ENCODE measurements at regions of chr22 and their contacts with region 1.

Region 1: DNA sequence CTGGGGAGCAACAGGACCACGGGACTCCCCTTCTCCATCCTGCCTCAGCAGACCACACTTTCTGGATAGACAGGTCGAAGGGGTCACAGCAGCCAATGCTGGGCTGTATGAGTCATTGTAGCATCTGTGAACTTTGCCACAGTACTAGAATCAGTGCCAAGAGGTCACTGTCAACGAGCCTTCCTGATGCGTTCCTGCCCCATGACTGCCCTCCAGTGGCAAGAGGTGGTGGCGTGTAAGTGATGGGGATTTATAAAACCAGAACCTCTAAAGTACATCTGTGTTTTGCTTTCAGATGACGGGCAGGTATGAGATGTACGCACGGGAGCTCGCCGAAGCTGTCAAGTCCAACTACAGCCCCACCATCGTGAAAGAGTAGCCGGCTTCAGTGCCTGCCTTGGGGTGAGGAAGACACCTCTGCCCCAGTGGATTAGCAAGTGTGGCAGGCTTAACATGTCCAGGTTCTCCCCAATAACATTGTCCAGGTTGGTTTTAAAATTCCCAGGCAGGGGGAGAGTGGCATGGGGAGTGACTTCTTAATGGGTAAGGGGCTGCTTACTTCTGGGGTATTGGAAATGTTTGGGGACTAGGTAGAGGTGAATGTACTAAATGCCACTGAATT is 29.4 kb downstream of the GUCD1 start:
- DNase-seq: peak; percentile 54 to 77 (median 71)
- ATAC-seq: peak; percentile 98
- H3K4me3 ChIP-seq: no peak overlapping the region
- H3K4me3 Mint-ChIP-seq: no peak overlapping the region
- H3K27ac ChIP-seq: no peak overlapping the region
- H3K27ac Mint-ChIP-seq: no peak overlapping the region
- H3K4me1 ChIP-seq: no peaks in the 10 kb centered on the region
- H3K4me1 Mint-ChIP-seq: peaks cover 0 to 12% (median 9%) of the 10 kb centered on the region in 7 donors
- H3K27me3 ChIP-seq: no peaks in the 10 kb centered on the region
- H3K27me3 Mint-ChIP-seq: peaks cover 0 to 7% (median 0%) of the 10 kb centered on the region in 5 donors

Region 2: DNA sequence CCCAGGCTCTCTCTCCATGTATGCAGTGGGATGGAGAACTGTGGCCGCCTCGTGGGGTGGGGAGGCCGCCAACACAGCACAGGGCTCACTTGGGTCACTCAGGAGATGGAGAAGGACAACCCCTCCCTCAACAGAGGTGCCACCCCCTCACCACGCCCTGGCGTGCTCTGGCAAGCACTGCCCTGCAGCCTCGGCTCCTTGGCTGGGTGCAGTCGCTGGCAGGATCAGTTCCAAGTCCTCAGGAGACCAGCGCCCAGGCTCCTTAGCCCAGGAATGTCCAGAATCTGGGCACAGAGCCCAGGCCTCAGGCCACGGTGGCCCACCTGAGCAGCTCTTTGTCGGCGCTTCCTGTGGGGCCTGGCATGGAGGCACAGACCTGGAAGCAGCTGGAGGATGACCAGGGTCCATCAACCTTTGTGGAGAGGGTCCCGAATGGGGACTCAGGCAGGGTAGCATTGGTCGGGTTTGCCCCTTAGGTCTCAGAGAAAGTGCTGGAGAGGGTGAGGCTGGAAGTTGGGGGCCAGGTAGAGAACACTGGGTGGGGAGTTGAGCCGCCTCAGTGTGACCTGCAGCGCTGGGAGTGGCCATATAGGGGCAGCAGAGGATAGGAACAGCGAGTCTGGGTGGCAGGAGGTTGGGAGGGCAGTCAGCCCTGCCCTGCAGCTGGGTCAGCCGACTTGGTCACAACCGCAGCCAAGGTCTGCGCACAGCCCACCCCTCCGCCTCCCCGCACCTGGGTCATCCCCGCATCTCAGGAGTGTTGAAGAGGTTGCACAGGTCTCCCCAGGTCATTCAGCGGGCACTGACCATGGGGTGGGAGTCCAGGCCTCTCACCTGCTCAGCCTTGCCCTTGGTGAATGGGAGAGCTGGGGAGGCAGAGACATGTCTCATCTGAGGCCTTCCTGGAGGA is 336.0 kb before region 1 on chr22:
- CTCF ChIA-PET with region 1: no interaction called
- POLR2A ChIA-PET with region 1: no interaction called
- intact Hi-C with region 1: loop called in 1 of 2 experiments (anchors 1 kb)
- DNase-seq: peak in 7 of 9 donors; percentile 25 to 70 (median 44)
- ATAC-seq: peak; percentile 82
- H3K4me3 ChIP-seq: no peak overlapping the region
- H3K4me3 Mint-ChIP-seq: no peak overlapping the region
- H3K27ac ChIP-seq: no peak overlapping the region
- H3K27ac Mint-ChIP-seq: peak overlapping the region in 1 of 9 donors; percentile 90
- H3K4me1 ChIP-seq: no peaks in the 10 kb centered on the region
- H3K4me1 Mint-ChIP-seq: peaks cover 0 to 11% (median 0%) of the 10 kb centered on the region in 7 donors
- H3K27me3 ChIP-seq: no peaks in the 10 kb centered on the region
- H3K27me3 Mint-ChIP-seq: no peaks in the 10 kb centered on the region

Region 3: GRCh38 chr22:24410110-24410856 is 115.2 kb before region 1 on chr22:
- CTCF ChIA-PET with region 1: no interaction called
- POLR2A ChIA-PET with region 1: no interaction called
- intact Hi-C with region 1: no loop called
- DNase-seq: no peak
- ATAC-seq: peak; percentile 63
- H3K4me3 ChIP-seq: no peak overlapping the region
- H3K4me3 Mint-ChIP-seq: no peak overlapping the region
- H3K27ac ChIP-seq: no peak overlapping the region
- H3K27ac Mint-ChIP-seq: peak overlapping the region; percentile 14 to 88 (median 60)
- H3K4me1 ChIP-seq: peaks cover 12 to 14% of the 10 kb centered on the region in 2 donors
- H3K4me1 Mint-ChIP-seq: peaks cover 23 to 38% (median 33%) of the 10 kb centered on the region in 7 donors
- H3K27me3 ChIP-seq: no peaks in the 10 kb centered on the region
- H3K27me3 Mint-ChIP-seq: no peaks in the 10 kb centered on the region

Region 4: DNA sequence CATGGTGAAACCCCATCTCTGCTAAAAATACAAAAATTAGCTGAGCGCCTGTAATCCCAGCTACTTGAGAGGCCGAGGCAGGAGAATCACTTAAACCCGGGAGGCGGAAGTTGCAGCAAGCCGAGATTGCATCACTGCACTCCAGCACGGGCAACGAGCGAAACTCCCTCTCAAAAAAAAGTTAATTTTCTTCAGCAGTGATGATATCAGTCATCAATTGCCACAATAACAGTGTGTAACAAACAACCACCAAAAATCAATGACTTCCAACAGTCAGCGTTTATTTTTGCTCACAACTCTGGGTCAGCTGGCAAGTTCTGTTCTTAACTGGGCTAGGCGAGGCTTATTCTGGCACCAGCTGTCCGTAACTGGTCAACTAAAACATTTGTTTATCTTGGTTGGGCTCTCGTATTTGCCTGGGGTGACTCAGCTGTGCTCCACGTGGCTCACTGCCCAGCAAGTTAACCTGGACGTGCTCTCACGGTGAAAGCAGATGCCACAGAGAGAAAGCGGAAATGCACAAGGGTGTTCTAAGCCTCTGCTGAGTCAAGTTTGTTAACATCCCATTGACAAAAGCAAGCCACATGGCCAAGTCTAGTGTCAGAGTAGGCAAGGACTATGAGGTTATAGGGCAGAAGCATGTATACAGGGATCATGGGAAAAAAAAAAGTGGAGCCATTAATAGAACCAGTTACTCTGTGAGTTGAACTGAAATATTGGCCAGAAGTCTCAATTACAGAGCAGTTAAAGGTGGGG is 368.9 kb after region 1 on chr22:
- CTCF ChIA-PET with region 1: no interaction called
- POLR2A ChIA-PET with region 1: no interaction called
- intact Hi-C with region 1: no loop called
- DNase-seq: no peak
- ATAC-seq: no peak
- H3K4me3 ChIP-seq: no peak overlapping the region
- H3K4me3 Mint-ChIP-seq: no peak overlapping the region
- H3K27ac ChIP-seq: no peak overlapping the region
- H3K27ac Mint-ChIP-seq: no peak overlapping the region
- H3K4me1 ChIP-seq: no peaks in the 10 kb centered on the region
- H3K4me1 Mint-ChIP-seq: peaks cover 0 to 1% (median 0%) of the 10 kb centered on the region in 7 donors
- H3K27me3 ChIP-seq: no peaks in the 10 kb centered on the region
- H3K27me3 Mint-ChIP-seq: no peaks in the 10 kb centered on the region